ENCODE measurements at regions of chr6 and their contacts with region 1.

Region 1: GRCh38 chr6:72622094-72622940 is 453 bp downstream of the KCNQ5 start:
- DNase-seq: peak; percentile 54
- H3K4me3 Mint-ChIP-seq: peak overlapping the region; percentile 95
- H3K27ac Mint-ChIP-seq: peak overlapping the region; percentile 96
- H3K4me1 Mint-ChIP-seq: peaks cover 70% of the 10 kb centered on the region
- H3K27me3 Mint-ChIP-seq: no peaks in the 10 kb centered on the region

Region 2: DNA sequence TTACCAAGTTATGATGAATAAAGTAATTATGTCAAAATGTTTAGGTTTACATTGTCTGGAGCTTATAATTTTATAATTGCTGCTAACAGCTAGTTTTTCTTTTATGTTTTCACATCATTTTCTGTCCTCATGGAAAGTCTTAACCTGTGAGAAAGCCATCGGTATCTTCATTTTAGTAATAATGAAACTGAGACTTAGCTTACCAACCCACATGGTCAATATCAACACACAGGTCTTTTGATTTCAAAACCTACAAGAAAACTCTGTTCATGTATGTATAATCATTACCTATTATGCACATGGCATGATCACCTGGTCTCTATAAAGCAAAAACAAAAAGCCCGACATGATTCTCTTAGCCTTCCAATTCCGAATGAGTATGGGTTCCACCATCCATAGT is 61.5 kb after region 1 on chr6:
- intact Hi-C with region 1: loop called (anchors 1 kb)
- DNase-seq: no peak
- H3K4me3 Mint-ChIP-seq: no peak overlapping the region
- H3K27ac Mint-ChIP-seq: no peak overlapping the region
- H3K4me1 Mint-ChIP-seq: peaks cover 12% of the 10 kb centered on the region
- H3K27me3 Mint-ChIP-seq: no peaks in the 10 kb centered on the region

Region 3: GRCh38 chr6:72748759-72749158 is 126.4 kb after region 1 on chr6:
- intact Hi-C with region 1: loop called (anchors 2 kb)
- DNase-seq: no peak
- H3K4me3 Mint-ChIP-seq: no peak overlapping the region
- H3K27ac Mint-ChIP-seq: no peak overlapping the region
- H3K4me1 Mint-ChIP-seq: peaks cover 15% of the 10 kb centered on the region
- H3K27me3 Mint-ChIP-seq: no peaks in the 10 kb centered on the region

Region 4: GRCh38 chr6:72787391-72788031 is 165.2 kb after region 1 on chr6:
- intact Hi-C with region 1: no loop called
- DNase-seq: no peak
- H3K4me3 Mint-ChIP-seq: no peak overlapping the region
- H3K27ac Mint-ChIP-seq: no peak overlapping the region
- H3K4me1 Mint-ChIP-seq: peaks cover 5% of the 10 kb centered on the region
- H3K27me3 Mint-ChIP-seq: no peaks in the 10 kb centered on the region

Region 5: GRCh38 chr6:72950114-72950860 is 328.0 kb after region 1 on chr6:
- intact Hi-C with region 1: loop called (anchors 10 kb)
- DNase-seq: no peak
- H3K4me3 Mint-ChIP-seq: no peak overlapping the region
- H3K27ac Mint-ChIP-seq: no peak overlapping the region
- H3K4me1 Mint-ChIP-seq: peaks cover 14% of the 10 kb centered on the region
- H3K27me3 Mint-ChIP-seq: no peaks in the 10 kb centered on the region

Region 6: DNA sequence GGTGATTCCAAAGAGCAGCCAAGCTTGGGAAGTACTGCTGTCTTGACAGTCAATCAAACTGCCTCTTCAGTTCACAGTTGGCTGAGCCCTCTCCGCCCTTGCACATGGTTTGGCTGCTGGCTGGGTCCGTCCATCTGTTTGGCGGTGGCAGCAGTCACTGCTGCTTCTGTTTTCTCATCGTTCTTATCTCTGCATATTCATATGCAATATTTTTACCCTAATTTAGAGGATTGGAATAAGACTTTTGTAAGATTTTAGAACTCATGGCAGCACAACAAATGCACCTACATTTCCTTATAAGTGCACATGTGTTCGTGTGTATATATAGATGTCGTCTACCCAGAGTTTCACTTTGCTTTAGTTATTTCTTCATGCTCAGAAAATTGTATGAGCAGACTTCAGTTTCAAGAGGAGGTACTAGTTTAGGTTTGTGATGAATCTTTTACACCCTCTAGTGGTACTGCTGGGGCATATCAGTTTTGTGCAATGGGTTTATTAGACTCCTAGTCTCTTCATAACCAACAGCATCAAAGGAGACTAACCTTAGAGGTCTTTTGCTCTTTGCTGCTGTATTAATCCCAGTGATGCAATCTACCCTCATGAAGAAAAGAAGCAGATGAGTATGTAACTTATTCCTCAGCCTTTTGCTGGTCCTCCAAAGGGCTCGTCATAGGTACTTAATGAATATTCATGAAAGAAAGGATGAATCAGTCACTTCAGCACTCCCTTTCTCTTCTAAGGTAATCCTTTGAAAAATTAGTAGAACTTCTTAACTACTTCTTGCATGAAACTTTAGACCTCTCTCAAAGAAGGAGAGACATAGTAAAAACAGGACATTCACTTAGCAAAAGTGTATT is 558.7 kb after region 1 on chr6:
- intact Hi-C with region 1: loop called (anchors 5 kb)
- DNase-seq: no peak
- H3K4me3 Mint-ChIP-seq: no peak overlapping the region
- H3K27ac Mint-ChIP-seq: no peak overlapping the region
- H3K4me1 Mint-ChIP-seq: peaks cover 4% of the 10 kb centered on the region
- H3K27me3 Mint-ChIP-seq: no peaks in the 10 kb centered on the region

Region 7: GRCh38 chr6:73329201-73329600 is 706.9 kb after region 1 on chr6:
- intact Hi-C with region 1: loop called (anchors 10 kb)
- DNase-seq: no peak
- H3K4me3 Mint-ChIP-seq: no peak overlapping the region
- H3K27ac Mint-ChIP-seq: no peak overlapping the region
- H3K4me1 Mint-ChIP-seq: peaks cover 7% of the 10 kb centered on the region
- H3K27me3 Mint-ChIP-seq: peaks cover 35% of the 10 kb centered on the region

Region 8: GRCh38 chr6:73520688-73521350 is 898.5 kb after region 1 on chr6 and contains the start of gene EEF1A1:
- intact Hi-C with region 1: loop called (anchors 5 kb)
- DNase-seq: peak; percentile 98
- H3K4me3 Mint-ChIP-seq: peak within 1 kb of the TSS; percentile 98
- H3K27ac Mint-ChIP-seq: peak within 1 kb of the TSS; percentile 100
- H3K4me1 Mint-ChIP-seq: peaks cover 32% of the 10 kb centered on the region
- H3K27me3 Mint-ChIP-seq: no peaks in the 10 kb centered on the region
- total RNA-seq, gene EEF1A1: 11,266 and 11,402 TPM in 2 replicates